PC-9 (cell line): ENCODE measurements at regions of chr1 and their contacts with region 1.

Region 1: GRCh38 chr1:53393325-53393792 is 65.5 kb upstream of the LRP8 start:
- DNase-seq: peak in 1 of 2 experiments; percentile 81
- H3K4me3 ChIP-seq: no peak overlapping the region
- H3K27ac ChIP-seq: no peak overlapping the region
- H3K4me1 ChIP-seq: 0 out of 2 replicates have a peak, but pooled peaks cover 7% of the 10 kb centered on the region
- H3K27me3 ChIP-seq: peaks cover 31% of the 10 kb centered on the region; the same call in 1 of the 2 replicates
- CTCF ChIP-seq: peak; percentile 94

Region 2: GRCh38 chr1:53271768-53272090 is 121.6 kb before region 1 on chr1:
- CTCF ChIA-PET with region 1: no interaction called
- POLR2A ChIA-PET with region 1: no interaction called
- intact Hi-C with region 1: no loop called
- DNase-seq: no peak
- H3K4me3 ChIP-seq: no peak overlapping the region
- H3K27ac ChIP-seq: no peak overlapping the region
- H3K4me1 ChIP-seq: peaks cover 14% of the 10 kb centered on the region; the same call in 1 of the 2 replicates
- H3K27me3 ChIP-seq: no peaks in the 10 kb centered on the region
- CTCF ChIP-seq: no peak

Region 3: DNA sequence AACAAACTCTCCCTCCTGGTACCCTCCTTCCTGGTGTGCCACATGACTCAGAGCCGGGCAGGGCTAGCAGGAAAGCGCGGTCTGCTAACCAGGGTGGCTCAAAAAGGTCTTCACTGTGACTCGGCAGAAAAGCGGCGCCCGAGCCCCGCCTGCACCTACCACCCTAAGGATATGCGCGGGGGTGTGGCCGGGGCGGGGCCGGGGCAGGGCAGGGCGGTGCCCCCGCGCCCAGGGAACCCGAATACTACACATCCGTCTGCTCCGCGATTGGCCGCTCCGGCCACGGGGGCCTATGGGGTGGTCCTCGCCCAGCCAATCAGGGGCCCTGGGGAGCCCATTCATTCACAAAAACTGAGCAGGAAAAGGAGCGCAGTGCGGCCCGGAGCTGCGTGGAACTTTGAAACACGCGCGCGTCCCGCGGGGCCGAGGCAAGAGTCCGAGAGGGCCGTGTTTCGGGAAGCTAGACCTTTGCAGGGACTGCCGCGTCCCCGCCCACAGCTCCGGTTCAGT is 67.2 kb before region 1 on chr1:
- CTCF ChIA-PET with region 1: no interaction called
- POLR2A ChIA-PET with region 1: interaction called, 3 read pairs
- intact Hi-C with region 1: loop called (anchors 2 kb)
- DNase-seq: peak; percentile 94 to 99
- H3K4me3 ChIP-seq: peak overlapping the region; percentile 75
- H3K27ac ChIP-seq: peak overlapping the region; percentile 94
- H3K4me1 ChIP-seq: peaks cover 25% of the 10 kb centered on the region
- H3K27me3 ChIP-seq: no peaks in the 10 kb centered on the region
- CTCF ChIP-seq: no peak

Region 4: GRCh38 chr1:53376041-53376461 is 17.3 kb before region 1 on chr1:
- CTCF ChIA-PET with region 1: no interaction called
- POLR2A ChIA-PET with region 1: no interaction called
- intact Hi-C with region 1: no loop called
- DNase-seq: no peak
- H3K4me3 ChIP-seq: no peak overlapping the region
- H3K27ac ChIP-seq: no peak overlapping the region
- H3K4me1 ChIP-seq: peaks cover under 1% of the 10 kb centered on the region; the same call in 1 of the 2 replicates
- H3K27me3 ChIP-seq: no peaks in the 10 kb centered on the region
- CTCF ChIP-seq: no peak